Sigmoid colon (tissue), 7 donors: ENCODE measurements at regions of chr1 and their contacts with region 1.

Region 1: GRCh38 chr1:114418247-114418646 is 92.8 kb downstream of the TRIM33 start:
- DNase-seq: no peak
- H3K4me3 ChIP-seq: no peak overlapping the region
- H3K27ac ChIP-seq: no peak overlapping the region
- H3K4me1 ChIP-seq: no peaks in the 10 kb centered on the region
- H3K27me3 ChIP-seq: no peaks in the 10 kb centered on the region
- CTCF ChIP-seq: no peak
- EP300 ChIP-seq: no peak
- POLR2A ChIP-seq: no peak

Region 2: DNA sequence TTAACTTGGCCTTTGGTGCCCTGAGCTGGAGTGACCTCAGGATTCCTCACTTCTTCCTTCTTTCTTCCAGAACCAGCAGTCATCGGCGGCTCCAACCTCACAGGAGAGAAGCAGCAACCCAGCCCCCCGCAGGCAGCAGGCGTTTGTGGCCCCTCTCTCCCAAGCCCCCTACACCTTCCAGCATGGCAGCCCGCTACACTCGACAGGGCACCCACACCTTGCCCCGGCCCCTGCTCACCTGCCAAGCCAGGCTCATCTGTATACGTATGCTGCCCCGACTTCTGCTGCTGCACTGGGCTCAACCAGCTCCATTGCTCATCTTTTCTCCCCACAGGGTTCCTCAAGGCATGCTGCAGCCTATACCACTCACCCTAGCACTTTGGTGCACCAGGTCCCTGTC is 445.3 kb before region 1 on chr1:
- intact Hi-C with region 1: loop called (anchors 5 kb)
- DNase-seq: no peak
- H3K4me3 ChIP-seq: no peak overlapping the region
- H3K27ac ChIP-seq: no peak overlapping the region
- H3K4me1 ChIP-seq: peaks cover 0 to 32% (median 19%) of the 10 kb centered on the region in 4 donors
- H3K27me3 ChIP-seq: no peaks in the 10 kb centered on the region
- CTCF ChIP-seq: no peak
- EP300 ChIP-seq: no peak
- POLR2A ChIP-seq: no peak

Region 3: GRCh38 chr1:114575532-114575931 is 157.3 kb after region 1 on chr1:
- intact Hi-C with region 1: loop called (anchors 10 kb)
- DNase-seq: no peak
- H3K4me3 ChIP-seq: no peak overlapping the region
- H3K27ac ChIP-seq: no peak overlapping the region
- H3K4me1 ChIP-seq: peaks cover 0 to 21% (median 13%) of the 10 kb centered on the region in 4 donors
- H3K27me3 ChIP-seq: no peaks in the 10 kb centered on the region
- CTCF ChIP-seq: no peak
- EP300 ChIP-seq: no peak
- POLR2A ChIP-seq: no peak